AG04450 (cell line): ENCODE measurements at regions of chr14 and their contacts with region 1.

Region 1: DNA sequence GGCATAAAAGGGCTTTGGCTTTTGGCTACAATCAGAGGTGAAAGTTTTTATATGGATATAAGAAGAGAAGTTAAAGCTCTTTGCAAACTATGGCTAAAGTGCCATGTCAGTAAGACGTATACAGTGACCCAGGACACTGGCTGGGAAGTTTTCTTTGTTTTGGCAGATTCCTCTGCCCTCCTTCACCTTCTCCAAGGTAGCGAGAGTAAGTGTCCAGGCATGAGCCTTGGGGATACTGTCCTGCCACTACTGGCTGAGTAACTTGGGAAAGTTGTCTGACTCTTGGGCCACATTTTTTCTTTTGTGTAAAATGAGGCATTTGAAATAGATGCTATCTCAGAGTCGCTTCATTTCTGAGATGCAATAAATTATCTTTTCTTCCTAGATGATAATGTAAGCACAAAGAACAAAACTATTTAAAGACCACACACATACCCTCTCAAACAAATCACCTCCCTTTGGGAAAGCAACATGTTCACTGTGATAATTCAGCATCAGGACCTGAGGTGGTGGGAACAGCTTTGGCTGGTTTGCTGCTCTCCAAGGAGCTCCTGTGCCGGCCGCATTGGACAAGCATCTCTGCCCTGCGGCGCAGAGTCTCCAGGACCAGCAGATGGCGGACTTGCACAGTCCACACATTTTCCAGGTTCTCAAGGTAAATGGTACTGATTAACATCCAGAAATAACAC is 106.3 kb downstream of the PTCSC3 start:
- DNase-seq: peak; percentile 32
- H3K4me3 ChIP-seq: no peak overlapping the region
- H3K27ac ChIP-seq: no peak overlapping the region
- H3K27me3 ChIP-seq: no peaks in the 10 kb centered on the region
- CTCF ChIP-seq: peak; percentile 92

Region 2: DNA sequence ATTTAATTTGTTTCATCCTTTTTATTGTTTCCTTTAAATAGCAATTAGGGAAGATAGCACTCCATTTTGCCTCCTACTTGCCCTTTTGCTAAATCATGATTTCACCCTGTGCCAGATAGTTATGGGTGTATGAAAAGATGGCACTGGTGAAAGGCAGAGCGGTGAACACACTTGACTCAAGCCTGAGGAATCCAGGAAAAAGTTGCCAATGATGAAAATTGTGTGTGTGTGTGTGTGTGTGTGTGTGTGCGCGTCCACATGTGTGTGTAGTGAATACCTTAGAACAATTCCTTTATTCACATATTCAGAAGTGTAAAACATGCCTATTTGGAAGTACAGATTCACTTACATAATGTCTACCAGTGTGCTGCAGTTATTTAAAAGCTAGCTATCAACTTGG is 17.5 kb before region 1 on chr14:
- CTCF ChIA-PET with region 1: interaction called, 15 read pairs
- POLR2A ChIA-PET with region 1: no interaction called
- DNase-seq: no peak
- H3K4me3 ChIP-seq: no peak overlapping the region
- H3K27ac ChIP-seq: no peak overlapping the region
- H3K27me3 ChIP-seq: no peaks in the 10 kb centered on the region
- CTCF ChIP-seq: no peak

Region 3: DNA sequence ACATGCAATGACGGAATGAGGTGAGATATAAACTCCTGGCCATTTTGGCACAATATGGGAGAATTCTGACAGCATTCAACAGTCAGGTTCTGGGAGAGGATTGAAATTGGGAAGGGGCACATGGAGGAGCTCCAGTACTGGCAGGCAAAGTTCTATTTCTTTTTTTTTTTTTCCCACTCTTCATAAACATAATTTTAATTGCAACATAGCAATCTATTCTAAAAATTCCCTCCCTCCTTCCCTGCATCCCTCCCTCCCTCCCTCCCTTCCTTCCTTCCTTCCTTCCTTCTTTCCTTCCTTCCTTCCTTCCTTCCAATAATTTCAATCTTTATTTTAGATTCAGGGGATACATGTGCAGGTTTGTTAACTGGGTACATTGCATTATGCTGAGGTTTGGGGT is 13.1 kb after region 1 on chr14:
- CTCF ChIA-PET with region 1: interaction called, 37 read pairs
- POLR2A ChIA-PET with region 1: no interaction called
- DNase-seq: no peak
- H3K4me3 ChIP-seq: no peak overlapping the region
- H3K27ac ChIP-seq: no peak overlapping the region
- H3K27me3 ChIP-seq: no peaks in the 10 kb centered on the region
- CTCF ChIP-seq: no peak

Region 4: GRCh38 chr14:36365766-36366165 is 295.6 kb after region 1 on chr14:
- CTCF ChIA-PET with region 1: interaction called, 24 read pairs
- POLR2A ChIA-PET with region 1: no interaction called
- DNase-seq: no peak
- H3K4me3 ChIP-seq: no peak overlapping the region
- H3K27ac ChIP-seq: no peak overlapping the region
- H3K27me3 ChIP-seq: no peaks in the 10 kb centered on the region
- CTCF ChIP-seq: no peak